ENCODE measurements at regions of chr1 and their contacts with region 1.

Region 1: GRCh38 chr1:238530209-238530826 is 639.6 kb upstream of the ZP4 start:
- DNase-seq: no peak
- H3K4me3 ChIP-seq: no peak overlapping the region
- H3K27ac ChIP-seq: no peak overlapping the region
- H3K4me1 ChIP-seq: no peaks in the 10 kb centered on the region
- H3K27me3 ChIP-seq: no peaks in the 10 kb centered on the region
- CTCF ChIP-seq: no peak
- POLR2A ChIP-seq: no peak

Region 2: GRCh38 chr1:238364214-238364892 is 166.0 kb before region 1 on chr1:
- CTCF ChIA-PET with region 1: no interaction called
- POLR2A ChIA-PET with region 1: no interaction called
- dilution Hi-C with region 1: no loop called
- intact Hi-C with region 1: no loop called
- DNase-seq: no peak
- H3K4me3 ChIP-seq: no peak overlapping the region
- H3K27ac ChIP-seq: no peak overlapping the region
- H3K4me1 ChIP-seq: no peaks in the 10 kb centered on the region
- H3K27me3 ChIP-seq: no peaks in the 10 kb centered on the region
- CTCF ChIP-seq: no peak
- POLR2A ChIP-seq: no peak

Region 3: GRCh38 chr1:238558156-238558555 is 27.8 kb after region 1 on chr1:
- CTCF ChIA-PET with region 1: no interaction called
- POLR2A ChIA-PET with region 1: no interaction called
- dilution Hi-C with region 1: no loop called
- intact Hi-C with region 1: loop called (anchors 1 kb)
- DNase-seq: no peak
- H3K4me3 ChIP-seq: no peak overlapping the region
- H3K27ac ChIP-seq: no peak overlapping the region
- H3K4me1 ChIP-seq: no peaks in the 10 kb centered on the region
- H3K27me3 ChIP-seq: no peaks in the 10 kb centered on the region
- CTCF ChIP-seq: no peak
- POLR2A ChIP-seq: no peak